ENCODE measurements at regions of chr4 and their contacts with region 1.

Region 1: DNA sequence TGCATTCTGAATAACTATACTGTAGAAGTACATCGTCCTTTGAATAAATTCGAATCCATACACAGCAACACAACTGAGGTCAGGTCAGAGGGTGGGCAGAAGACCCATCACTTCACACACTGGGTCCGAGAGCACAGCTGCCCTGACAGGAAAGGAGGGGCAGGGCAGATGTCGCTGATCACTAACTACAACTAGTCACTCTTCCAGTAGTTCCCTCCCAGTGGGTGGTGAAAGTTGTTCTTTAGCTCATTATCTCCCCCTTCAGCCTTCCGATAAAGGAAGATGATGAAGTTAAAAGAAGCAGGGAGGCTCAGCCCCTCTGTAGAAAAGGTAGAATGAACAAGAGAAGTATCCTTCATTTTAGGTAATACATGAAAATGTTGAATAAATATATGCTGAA is 278.9 kb downstream of the INPP4B start:
- DNase-seq: peak; percentile 73
- ATAC-seq: peak; percentile 79
- H3K4me3 Mint-ChIP-seq: peak overlapping the region; percentile 88
- H3K27ac Mint-ChIP-seq: peak overlapping the region; percentile 95
- H3K4me1 Mint-ChIP-seq: peaks cover 64% of the 10 kb centered on the region
- H3K27me3 Mint-ChIP-seq: no peaks in the 10 kb centered on the region

Region 2: GRCh38 chr4:142293536-142293935 is 273.7 kb before region 1 on chr4:
- CTCF ChIA-PET with region 1: interaction called, 3 read pairs
- POLR2A ChIA-PET with region 1: no interaction called
- intact Hi-C with region 1: loop called in 1 of 2 experiments (anchors 5 kb)
- DNase-seq: no peak
- ATAC-seq: no peak
- H3K4me3 Mint-ChIP-seq: no peak overlapping the region
- H3K27ac Mint-ChIP-seq: peak overlapping the region; percentile 3
- H3K4me1 Mint-ChIP-seq: peaks cover 67% of the 10 kb centered on the region
- H3K27me3 Mint-ChIP-seq: no peaks in the 10 kb centered on the region

Region 3: GRCh38 chr4:142396279-142396678 is 170.9 kb before region 1 on chr4:
- CTCF ChIA-PET with region 1: no interaction called
- POLR2A ChIA-PET with region 1: interaction called, 7 read pairs
- intact Hi-C with region 1: loop called in 1 of 2 experiments (anchors 2 kb)
- DNase-seq: no peak
- ATAC-seq: peak; percentile 28
- H3K4me3 Mint-ChIP-seq: peak overlapping the region; percentile 47
- H3K27ac Mint-ChIP-seq: peak overlapping the region; percentile 94
- H3K4me1 Mint-ChIP-seq: peaks cover 82% of the 10 kb centered on the region
- H3K27me3 Mint-ChIP-seq: no peaks in the 10 kb centered on the region

Region 4: DNA sequence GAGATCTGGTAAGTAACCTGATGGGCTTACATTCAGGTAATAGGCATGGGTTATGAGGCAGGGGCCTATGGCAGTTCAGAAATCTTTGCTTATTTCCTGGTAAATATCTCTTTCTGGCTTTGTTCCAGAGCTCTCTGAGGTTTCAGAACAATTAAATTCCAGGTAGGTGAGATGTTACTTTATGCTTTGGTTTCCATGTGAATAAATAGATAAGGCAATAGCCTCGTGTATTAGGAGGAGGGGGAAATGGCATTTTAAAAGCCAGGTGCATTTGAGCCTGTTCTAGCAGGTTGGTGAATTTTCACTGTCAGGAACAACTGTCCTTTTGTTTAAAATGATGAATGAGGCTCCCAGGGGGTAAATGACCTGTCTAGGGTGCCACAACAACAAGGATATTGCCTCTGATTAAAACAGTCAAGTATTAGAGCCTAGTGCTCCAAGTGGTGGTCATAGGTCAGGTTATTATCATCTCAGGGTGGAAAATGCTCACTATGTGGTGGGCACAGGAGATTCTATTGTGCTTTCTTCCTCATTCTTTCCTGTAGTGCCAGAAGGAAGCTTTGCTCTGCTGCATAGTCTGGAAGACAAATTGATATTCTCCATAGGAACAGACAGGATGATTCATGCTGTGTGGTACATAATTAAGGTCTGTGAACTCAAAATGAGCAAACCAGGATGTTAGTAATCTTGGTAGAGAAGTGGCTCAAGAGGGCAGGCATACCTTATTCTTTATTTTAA is 17.3 kb before region 1 on chr4:
- CTCF ChIA-PET with region 1: interaction called, 5 read pairs
- POLR2A ChIA-PET with region 1: interaction called, 6 read pairs
- intact Hi-C with region 1: loop called in 1 of 2 experiments (anchors 2 kb)
- DNase-seq: no peak
- ATAC-seq: peak; percentile 83
- H3K4me3 Mint-ChIP-seq: no peak overlapping the region
- H3K27ac Mint-ChIP-seq: peak overlapping the region; percentile 86
- H3K4me1 Mint-ChIP-seq: peaks cover 66% of the 10 kb centered on the region
- H3K27me3 Mint-ChIP-seq: no peaks in the 10 kb centered on the region

Region 5: DNA sequence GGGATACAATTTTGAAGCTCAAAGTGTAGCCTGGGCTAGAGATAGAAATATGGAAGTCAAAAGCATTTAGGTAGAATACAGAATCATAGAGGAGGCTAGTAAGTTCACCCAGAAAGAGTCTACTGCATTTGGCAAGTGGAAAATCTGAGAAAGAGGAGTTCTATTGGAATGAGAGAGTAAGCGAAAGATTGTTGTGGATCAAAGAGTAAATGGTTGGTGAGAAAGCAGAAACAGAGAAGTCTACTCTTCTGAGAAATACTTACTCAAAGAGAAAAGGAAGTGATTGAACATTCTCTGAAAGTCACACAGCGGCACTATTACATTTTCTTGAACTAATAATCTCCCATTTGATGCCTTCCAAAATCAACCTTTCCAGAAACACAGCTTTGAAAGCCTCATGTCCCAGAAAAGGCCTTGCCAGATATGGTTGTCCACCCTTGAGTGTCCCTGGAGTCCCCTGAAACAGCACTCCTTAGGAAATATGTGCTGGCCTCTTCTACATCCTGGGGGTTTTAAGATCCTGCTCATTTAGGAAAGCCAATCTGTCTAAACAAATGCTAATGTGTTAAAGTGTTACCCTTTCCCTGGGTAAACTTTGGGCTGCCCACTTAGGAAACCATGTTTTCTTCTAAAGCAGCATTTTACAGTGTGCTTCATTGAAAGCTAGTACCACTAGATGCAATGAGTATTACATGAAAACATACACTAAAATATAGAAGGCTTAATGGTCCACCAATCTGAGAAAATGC is 146.3 kb after region 1 on chr4:
- CTCF ChIA-PET with region 1: no interaction called
- POLR2A ChIA-PET with region 1: no interaction called
- intact Hi-C with region 1: loop called in 1 of 2 experiments (anchors 5 kb)
- DNase-seq: no peak
- ATAC-seq: peak; percentile 76
- H3K4me3 Mint-ChIP-seq: peak overlapping the region; percentile 12
- H3K27ac Mint-ChIP-seq: peak overlapping the region; percentile 87
- H3K4me1 Mint-ChIP-seq: peaks cover 65% of the 10 kb centered on the region
- H3K27me3 Mint-ChIP-seq: no peaks in the 10 kb centered on the region

Region 6: DNA sequence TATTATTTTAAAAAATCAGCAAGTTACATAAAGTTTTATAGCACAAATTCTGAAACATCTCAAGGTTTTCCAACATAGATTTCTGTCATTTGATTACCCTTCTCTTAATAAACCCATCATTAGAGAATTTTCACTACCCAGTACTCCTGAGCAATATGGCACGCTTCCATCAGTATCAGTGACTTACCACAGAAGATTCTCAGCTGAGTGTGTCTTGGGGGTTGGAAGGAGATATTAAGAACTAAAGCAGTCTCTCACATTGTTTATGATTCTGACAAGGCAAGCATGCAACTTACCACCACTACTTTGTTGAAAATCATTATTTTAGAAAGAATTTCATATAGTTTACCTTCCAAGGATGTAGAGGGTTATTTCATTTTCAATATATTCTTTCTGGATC is 211.2 kb after region 1 on chr4:
- CTCF ChIA-PET with region 1: no interaction called
- POLR2A ChIA-PET with region 1: no interaction called
- intact Hi-C with region 1: no loop called
- DNase-seq: no peak
- ATAC-seq: no peak
- H3K4me3 Mint-ChIP-seq: no peak overlapping the region
- H3K27ac Mint-ChIP-seq: no peak overlapping the region
- H3K4me1 Mint-ChIP-seq: peaks cover 3% of the 10 kb centered on the region
- H3K27me3 Mint-ChIP-seq: peaks cover 3% of the 10 kb centered on the region

Region 7: DNA sequence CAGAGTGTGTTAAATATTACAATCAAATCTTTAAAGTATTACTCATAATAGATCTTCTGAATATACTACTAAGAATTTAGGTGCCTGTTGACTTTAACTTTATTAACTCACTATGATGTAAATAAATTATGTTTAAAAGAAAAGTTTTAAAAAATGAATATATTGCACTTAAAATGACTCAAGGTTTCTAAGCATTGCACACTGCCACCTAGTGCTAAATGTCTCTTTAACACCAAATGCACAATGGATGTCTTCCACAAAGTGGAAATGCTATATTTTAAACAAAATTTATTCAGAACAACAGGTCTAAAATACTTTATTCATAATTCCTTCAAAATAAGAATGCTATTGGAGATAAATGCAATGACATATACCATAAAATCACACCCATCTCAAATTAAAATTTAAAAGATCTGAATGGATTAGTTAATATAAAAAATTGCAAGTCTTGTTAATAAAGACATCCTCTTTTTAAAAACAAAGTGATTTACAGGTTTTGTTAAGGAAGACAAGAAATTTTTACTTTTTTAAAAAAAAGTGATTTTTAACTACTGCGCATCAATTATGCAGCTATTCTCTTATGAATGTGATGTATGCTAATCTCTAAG is 273.4 kb after region 1 on chr4:
- CTCF ChIA-PET with region 1: interaction called, 5 read pairs
- POLR2A ChIA-PET with region 1: no interaction called
- intact Hi-C with region 1: loop called in 1 of 2 experiments (anchors 5 kb)
- DNase-seq: peak; percentile 8
- ATAC-seq: no peak
- H3K4me3 Mint-ChIP-seq: no peak overlapping the region
- H3K27ac Mint-ChIP-seq: no peak overlapping the region
- H3K4me1 Mint-ChIP-seq: peaks cover 31% of the 10 kb centered on the region
- H3K27me3 Mint-ChIP-seq: no peaks in the 10 kb centered on the region

Region 8: GRCh38 chr4:143513306-143514168 is 946.3 kb after region 1 on chr4 and contains the start of gene SMARCA5:
- CTCF ChIA-PET with region 1: no interaction called
- POLR2A ChIA-PET with region 1: no interaction called
- intact Hi-C with region 1: loop called in 1 of 2 experiments (anchors 5 kb)
- DNase-seq: peak; percentile 97
- ATAC-seq: peak; percentile 85
- H3K4me3 Mint-ChIP-seq: peak within 1 kb of the TSS; percentile 100
- H3K27ac Mint-ChIP-seq: peak within 1 kb of the TSS; percentile 99
- H3K4me1 Mint-ChIP-seq: peaks cover 29% of the 10 kb centered on the region
- H3K27me3 Mint-ChIP-seq: no peaks in the 10 kb centered on the region
- total RNA-seq, gene SMARCA5: 66.6 to 69.8 TPM

Measured in activated CD4-positive, alpha-beta T cell treated with anti-CD3 and anti-CD28 coated beads for 36 hours (primary cell).